Cardiac septum (tissue), 1 donor: ENCODE measurements at regions of chr12 and their contacts with region 1.

Region 1: GRCh38 chr12:22443379-22444316 is 100.7 kb downstream of the C2CD5 start:
- DNase-seq: peak; percentile 76

Region 2: GRCh38 chr12:22083167-22083566 is 360.5 kb before region 1 on chr12:
- intact Hi-C with region 1: loop called (anchors 5 kb)
- DNase-seq: no peak

Region 3: DNA sequence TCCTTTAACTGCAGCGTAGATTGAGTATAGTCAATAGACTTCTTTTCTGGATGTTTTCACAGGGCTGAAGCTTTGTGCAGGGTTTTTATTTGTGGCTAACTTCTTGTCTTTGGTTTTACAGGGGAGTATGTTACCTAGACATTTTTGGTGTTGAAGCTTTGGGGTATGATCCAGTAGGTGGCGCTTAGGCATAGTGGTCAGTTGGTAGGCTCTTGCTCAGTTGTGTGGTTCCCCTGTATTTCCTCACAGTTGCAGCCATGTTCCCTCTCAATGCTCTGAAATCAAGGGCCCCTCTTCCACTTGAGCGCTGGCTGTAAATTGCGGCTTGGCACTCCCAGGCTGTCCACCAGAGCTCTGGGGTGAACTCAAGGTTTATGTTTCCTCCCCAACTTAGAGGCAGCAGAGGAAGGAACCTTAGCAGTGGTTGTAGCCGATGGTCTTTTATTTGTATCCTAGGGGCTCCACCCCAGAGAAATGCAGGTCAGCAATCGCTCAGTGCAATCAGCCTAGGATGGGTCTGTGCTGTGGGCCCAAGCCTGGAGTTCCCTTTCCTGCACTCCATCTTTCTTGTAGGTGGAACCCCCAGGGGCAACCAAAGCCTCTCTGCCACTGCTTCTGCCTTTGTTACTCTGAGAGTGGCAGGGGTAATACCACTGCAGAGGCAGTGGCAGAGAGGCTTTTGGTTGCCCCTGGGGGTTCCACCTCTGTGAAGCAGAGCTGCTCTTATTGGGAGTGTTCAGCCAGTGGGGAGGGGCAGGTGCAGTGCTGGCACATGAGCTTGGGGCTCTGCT is 342.5 kb before region 1 on chr12:
- intact Hi-C with region 1: loop called (anchors 5 kb)
- DNase-seq: no peak